Testis (tissue), 5 donors: ENCODE measurements at regions of chr9 and their contacts with region 1.

Region 1: DNA sequence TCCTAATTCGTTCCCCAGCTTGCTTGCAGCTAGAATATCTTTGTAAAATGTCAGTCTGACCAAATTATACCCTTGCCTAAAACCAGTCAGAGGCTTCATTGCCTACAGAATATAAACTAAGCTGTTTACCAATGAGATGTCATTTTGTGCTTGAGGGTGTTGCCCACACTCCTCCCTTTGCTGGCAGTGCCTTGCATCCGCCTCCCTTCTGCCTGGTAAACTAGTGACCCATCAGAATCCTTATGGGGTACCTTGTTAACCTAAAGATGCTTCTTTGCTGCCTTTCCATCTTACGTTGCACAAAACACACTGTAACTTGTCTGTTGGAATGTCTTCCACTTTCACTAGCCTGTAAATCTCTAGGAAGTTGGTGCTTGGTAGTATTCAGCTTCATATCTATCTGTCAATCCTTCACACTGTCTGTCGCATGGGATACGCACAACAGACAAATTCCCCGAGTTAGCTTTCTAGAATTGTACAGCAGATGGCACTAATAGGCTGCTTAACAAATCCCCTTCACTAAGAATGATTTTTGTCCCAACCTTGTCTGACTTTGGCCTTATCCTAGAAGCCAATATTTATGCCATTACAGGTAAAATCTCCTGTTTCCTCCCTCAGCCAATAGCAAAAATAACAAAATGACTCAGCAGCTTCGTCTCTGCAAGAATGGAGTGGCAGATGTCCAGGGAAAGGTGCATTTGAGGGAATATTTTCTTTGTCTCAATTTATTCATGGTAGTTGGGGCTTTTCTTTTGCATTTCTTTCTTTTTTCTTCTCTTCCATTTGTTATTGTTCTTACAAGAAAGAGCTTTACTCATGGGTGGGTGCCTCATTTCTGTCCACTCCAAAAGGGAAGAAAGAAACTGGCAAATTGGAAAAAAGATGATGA is 3.0 kb downstream of the NUDT2 start:
- DNase-seq: no peak
- H3K4me3 ChIP-seq: no peak overlapping the region
- H3K27ac ChIP-seq: no peak overlapping the region
- H3K4me1 ChIP-seq: peaks cover 8% of the 10 kb centered on the region
- H3K27me3 ChIP-seq: no peaks in the 10 kb centered on the region
- CTCF ChIP-seq: peak; percentile 19 to 41 (median 30)
- POLR2A ChIP-seq: no peak

Region 2: DNA sequence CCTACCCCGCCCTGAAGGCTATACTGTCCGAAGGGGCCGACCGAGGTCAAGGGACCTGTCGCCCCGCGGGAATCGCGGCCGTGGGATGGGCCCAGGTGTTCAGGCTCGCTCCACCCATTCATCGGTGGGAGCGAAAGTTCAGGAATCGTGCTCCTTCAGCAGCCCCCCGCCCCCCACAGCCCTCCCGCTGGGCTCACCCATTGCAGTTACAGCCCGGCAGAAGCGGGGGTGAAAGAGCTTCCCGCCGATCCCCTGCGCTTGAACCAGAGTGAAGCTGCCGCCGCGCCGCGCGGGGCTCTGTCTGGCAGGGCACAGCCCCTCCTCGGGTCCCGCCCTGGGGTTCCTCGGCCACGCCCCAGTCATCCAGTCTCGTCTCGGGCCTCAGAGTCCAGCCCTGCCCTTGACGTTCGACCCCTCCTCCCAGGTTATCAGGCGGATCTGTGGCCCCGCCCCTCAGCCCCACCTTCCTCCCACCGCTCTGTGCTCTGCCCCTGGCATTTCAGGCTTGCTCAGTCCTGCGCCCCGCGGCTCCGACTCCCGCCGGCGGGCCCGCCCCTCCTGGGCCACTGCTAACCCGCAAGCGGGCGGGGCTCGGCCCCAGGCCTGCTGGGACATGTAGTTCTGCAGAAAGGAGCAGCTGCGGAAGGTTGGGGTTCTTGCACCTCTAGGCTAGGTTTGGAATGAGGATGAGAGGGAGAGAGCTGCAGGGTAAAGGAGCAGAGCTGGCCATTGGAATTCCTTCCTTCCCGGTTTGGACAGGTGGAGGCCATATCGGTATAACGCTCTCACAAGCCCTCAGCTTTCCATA is 44.5 kb after region 1 on chr9 and contains the start of gene MYORG:
- intact Hi-C with region 1: loop called (anchors 5 kb)
- DNase-seq: peak; percentile 91
- H3K4me3 ChIP-seq: peak within 1 kb of the TSS; percentile 70 to 80
- H3K27ac ChIP-seq: peak within 1 kb of the TSS; percentile 31 to 64
- H3K4me1 ChIP-seq: peaks cover 15% of the 10 kb centered on the region
- H3K27me3 ChIP-seq: no peaks in the 10 kb centered on the region
- CTCF ChIP-seq: no peak
- POLR2A ChIP-seq: no peak
- total RNA-seq, gene MYORG: 2.8 to 4.6 TPM